Activated CD4-positive, alpha-beta memory T cell treated with anti-CD3 and anti-CD28 coated beads for 36 hours (primary cell): ENCODE measurements at regions of chr1 and their contacts with region 1.

Region 1: DNA sequence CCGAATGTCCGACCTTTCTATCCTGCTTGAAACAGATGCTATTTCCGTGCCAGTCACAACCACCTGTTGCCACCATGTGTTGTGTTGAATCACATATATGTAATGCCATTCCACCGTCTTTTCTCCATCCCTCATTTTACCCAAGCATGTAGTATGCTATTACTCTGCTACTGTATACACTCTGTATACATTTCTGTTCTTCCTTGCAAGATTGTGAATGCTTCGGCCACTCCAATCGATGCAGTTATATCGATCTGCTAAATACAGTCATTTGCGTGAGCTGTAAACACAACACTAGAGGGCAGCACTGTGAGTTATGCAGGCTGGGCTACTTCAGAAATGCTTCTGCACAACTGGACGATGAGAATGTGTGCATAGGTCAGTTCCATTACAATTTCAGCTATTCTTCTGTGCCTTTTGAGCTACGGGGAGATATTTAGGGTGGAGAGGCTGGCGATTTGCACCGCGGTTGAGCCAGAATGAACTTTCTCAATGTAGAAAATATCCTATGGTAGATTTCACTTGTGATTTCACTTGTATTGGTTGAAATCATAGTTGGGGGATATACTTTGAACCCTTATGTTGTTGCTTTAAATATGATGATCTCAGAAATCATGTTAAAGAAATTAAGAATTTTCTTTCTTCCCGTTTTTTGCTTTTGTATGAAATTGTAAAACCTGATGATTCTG is 289.8 kb downstream of the NTNG1 start:
- DNase-seq: peak; percentile 13
- H3K4me3 Mint-ChIP-seq: no peak overlapping the region
- H3K27ac Mint-ChIP-seq: no peak overlapping the region
- H3K4me1 Mint-ChIP-seq: no peaks in the 10 kb centered on the region
- H3K27me3 Mint-ChIP-seq: peaks cover 9% of the 10 kb centered on the region

Region 2: GRCh38 chr1:107362468-107363140 is 68.1 kb before region 1 on chr1:
- CTCF ChIA-PET with region 1: no interaction called
- POLR2A ChIA-PET with region 1: no interaction called
- intact Hi-C with region 1: no loop called
- DNase-seq: no peak
- H3K4me3 Mint-ChIP-seq: no peak overlapping the region
- H3K27ac Mint-ChIP-seq: no peak overlapping the region
- H3K4me1 Mint-ChIP-seq: no peaks in the 10 kb centered on the region
- H3K27me3 Mint-ChIP-seq: no peaks in the 10 kb centered on the region

Region 3: GRCh38 chr1:107451715-107452114 is 21.0 kb after region 1 on chr1:
- CTCF ChIA-PET with region 1: no interaction called
- POLR2A ChIA-PET with region 1: no interaction called
- intact Hi-C with region 1: no loop called
- DNase-seq: no peak
- H3K4me3 Mint-ChIP-seq: no peak overlapping the region
- H3K27ac Mint-ChIP-seq: no peak overlapping the region
- H3K4me1 Mint-ChIP-seq: no peaks in the 10 kb centered on the region
- H3K27me3 Mint-ChIP-seq: no peaks in the 10 kb centered on the region

Region 4: DNA sequence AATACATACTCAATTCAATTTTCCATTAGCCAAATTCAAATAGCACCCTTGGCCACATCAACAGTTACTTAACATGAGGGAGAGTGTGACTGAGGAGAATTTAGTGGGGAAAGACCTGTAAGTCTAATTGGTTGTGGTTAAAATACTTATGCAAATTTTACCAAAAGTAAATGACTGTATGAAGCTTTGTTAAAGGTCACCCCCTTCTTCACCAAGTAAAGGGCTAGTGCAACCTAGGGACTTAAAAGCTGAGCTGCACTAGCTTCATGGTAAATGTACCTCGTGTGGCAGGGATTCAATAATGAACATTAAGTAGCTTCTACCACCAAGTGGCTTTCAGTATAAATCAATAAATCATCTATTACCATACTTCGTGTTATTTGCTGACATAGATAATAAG is 82.2 kb after region 1 on chr1:
- CTCF ChIA-PET with region 1: no interaction called
- POLR2A ChIA-PET with region 1: no interaction called
- intact Hi-C with region 1: no loop called
- DNase-seq: no peak
- H3K4me3 Mint-ChIP-seq: no peak overlapping the region
- H3K27ac Mint-ChIP-seq: no peak overlapping the region
- H3K4me1 Mint-ChIP-seq: no peaks in the 10 kb centered on the region
- H3K27me3 Mint-ChIP-seq: no peaks in the 10 kb centered on the region

Region 5: DNA sequence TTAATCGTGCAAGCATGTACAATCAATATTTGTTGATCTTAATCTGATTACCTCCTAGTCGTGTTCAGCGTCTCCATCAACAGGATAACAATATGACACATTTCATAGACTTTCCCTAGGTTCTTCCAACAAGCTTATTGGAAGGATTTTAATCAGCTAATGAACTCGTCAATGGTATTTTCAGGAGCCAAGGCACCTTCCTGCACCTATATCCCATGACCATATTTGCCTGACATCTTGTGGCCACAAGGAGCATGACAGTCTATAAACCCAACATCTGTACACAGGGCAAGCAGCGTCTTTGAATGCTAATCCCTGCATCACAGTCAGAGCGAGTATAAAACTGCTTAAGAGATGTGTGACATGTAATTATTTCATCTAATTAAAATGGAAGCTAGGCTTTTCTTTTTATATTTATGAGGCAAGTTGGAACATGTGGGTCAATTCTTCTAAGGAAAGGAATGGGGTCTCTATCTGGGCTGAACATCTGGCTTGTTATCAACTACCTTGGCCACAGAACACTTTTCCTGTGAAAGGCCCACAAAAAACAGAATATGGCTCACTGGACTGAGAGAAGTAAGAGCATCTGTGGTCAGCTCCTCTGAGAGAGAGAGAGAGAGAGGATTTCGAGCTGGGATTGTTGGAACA is 98.9 kb after region 1 on chr1:
- CTCF ChIA-PET with region 1: interaction called, 6 read pairs
- POLR2A ChIA-PET with region 1: no interaction called
- intact Hi-C with region 1: loop called (anchors 1 kb)
- DNase-seq: peak; percentile 10
- H3K4me3 Mint-ChIP-seq: no peak overlapping the region
- H3K27ac Mint-ChIP-seq: no peak overlapping the region
- H3K4me1 Mint-ChIP-seq: no peaks in the 10 kb centered on the region
- H3K27me3 Mint-ChIP-seq: peaks cover 4% of the 10 kb centered on the region

Region 6: GRCh38 chr1:107750358-107750959 is 319.8 kb after region 1 on chr1:
- CTCF ChIA-PET with region 1: interaction called, 5 read pairs
- POLR2A ChIA-PET with region 1: no interaction called
- intact Hi-C with region 1: loop called (anchors 1 kb)
- DNase-seq: peak; percentile 59
- H3K4me3 Mint-ChIP-seq: no peak overlapping the region
- H3K27ac Mint-ChIP-seq: no peak overlapping the region
- H3K4me1 Mint-ChIP-seq: no peaks in the 10 kb centered on the region
- H3K27me3 Mint-ChIP-seq: no peaks in the 10 kb centered on the region

Region 7: DNA sequence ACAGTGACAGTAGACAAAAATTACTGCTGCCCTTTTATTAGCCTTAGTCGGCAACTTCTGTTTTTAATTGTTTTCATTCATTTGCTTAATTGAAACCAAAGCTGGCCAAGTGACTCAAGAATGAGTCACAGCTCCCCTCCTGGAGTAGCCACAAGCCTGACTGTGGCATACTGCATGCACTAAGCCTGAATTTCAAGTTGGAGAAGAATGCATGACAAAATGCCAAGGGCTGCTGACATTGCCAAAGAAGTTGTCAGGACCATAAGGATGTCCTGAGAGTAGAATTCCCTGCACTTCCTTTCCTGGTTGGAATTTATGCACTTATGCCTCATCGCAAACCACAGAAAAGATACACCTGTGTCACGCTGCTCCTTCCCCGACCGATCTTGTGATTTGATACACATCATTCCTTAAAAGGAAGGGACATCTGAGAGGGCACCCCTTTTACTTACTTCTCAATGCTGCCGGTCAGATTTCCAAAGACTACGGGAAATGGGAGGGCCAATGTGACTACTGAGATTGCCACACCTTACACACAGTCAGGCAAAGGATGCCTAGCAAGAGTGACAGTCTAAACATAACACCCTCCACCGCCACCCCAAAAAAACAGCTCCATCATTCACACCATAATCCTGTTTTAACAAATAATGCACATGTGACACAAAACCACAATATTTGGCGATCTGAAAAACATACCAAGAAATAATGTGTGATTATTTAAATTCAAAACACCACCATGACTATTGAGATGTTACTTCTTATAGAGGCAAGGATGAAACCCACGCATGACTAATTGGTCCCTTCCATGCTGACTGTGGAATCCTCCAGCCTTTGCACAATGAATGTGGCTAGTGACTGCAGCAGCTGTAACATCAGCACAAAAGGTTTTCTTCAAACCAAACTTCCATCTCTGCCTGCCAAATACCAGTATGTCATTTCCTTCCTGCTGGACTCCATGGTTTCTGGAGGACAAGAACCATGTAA is 506.1 kb after region 1 on chr1:
- CTCF ChIA-PET with region 1: no interaction called
- POLR2A ChIA-PET with region 1: no interaction called
- intact Hi-C with region 1: no loop called
- DNase-seq: peak; percentile 72
- H3K4me3 Mint-ChIP-seq: peak overlapping the region; percentile 49
- H3K27ac Mint-ChIP-seq: peak overlapping the region; percentile 64
- H3K4me1 Mint-ChIP-seq: peaks cover 44% of the 10 kb centered on the region
- H3K27me3 Mint-ChIP-seq: no peaks in the 10 kb centered on the region